Left ventricle myocardium inferior (tissue), 1 donor: ENCODE measurements at regions of chr3 and their contacts with region 1.

Region 1: GRCh38 chr3:148955544-148956346 is 35.6 kb upstream of the GYG1 start:
- DNase-seq: no peak
- H3K4me3 ChIP-seq: no peak overlapping the region
- H3K27ac ChIP-seq: peak overlapping the region; percentile 72
- H3K4me1 ChIP-seq: peaks cover 6% of the 10 kb centered on the region
- H3K27me3 ChIP-seq: no peaks in the 10 kb centered on the region
- CTCF ChIP-seq: peak; percentile 71

Region 2: GRCh38 chr3:148707601-148708380 is 248.0 kb before region 1 on chr3:
- intact Hi-C with region 1: no loop called
- DNase-seq: no peak
- H3K4me3 ChIP-seq: no peak overlapping the region
- H3K27ac ChIP-seq: no peak overlapping the region
- H3K4me1 ChIP-seq: no peaks in the 10 kb centered on the region
- H3K27me3 ChIP-seq: no peaks in the 10 kb centered on the region
- CTCF ChIP-seq: no peak

Region 3: DNA sequence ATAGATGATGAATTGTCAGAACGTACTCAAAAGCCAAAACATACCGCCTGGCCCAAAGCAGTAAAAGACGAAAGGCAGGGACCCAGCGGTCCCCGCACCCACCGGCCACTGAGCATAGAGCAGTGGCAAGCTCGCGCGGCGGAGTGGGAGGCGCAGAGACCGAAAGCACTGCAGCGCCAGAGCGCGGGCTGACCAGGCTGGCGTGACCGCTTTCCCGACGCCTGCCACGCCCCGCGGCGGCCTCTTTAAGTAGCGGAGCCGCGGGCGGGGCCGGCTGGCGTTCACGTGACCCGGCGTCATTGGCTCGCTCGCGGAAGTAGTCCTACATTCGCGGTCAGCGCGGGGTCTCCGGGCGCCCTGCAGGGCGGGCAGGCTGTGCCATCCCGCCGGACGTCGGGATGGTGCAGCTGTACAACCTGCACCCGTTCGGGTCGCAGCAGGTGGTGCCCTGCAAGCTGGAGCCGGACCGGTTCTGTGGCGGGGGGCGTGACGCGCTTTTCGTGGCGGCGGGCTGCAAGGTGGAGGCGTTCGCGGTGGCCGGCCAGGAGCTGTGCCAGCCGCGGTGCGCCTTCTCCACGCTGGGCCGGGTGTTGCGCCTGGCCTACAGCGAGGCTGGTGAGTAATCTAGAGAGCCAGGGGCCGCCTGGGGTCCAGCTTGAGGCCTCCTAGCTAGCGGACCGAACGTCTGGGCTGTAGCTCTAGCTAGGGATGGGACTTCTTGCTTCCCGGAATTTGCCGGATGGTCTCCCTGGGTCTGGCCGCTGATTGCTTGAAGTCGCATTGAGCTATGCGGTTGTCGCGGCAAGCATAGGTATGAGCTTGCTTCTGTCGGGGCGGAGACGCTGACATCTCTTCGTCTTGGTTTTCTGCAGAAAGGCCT is 173.8 kb after region 1 on chr3 and contains the start of gene HPS3:
- intact Hi-C with region 1: loop called (anchors 10 kb)
- DNase-seq: peak; percentile 93
- H3K4me3 ChIP-seq: peak within 1 kb of the TSS; percentile 77
- H3K27ac ChIP-seq: peak within 1 kb of the TSS; percentile 82
- H3K4me1 ChIP-seq: peaks cover 50% of the 10 kb centered on the region
- H3K27me3 ChIP-seq: no peaks in the 10 kb centered on the region
- CTCF ChIP-seq: no peak
- total RNA-seq, gene HPS3: 5.6 TPM

Region 4: GRCh38 chr3:149273096-149273751 is 317.5 kb after region 1 on chr3:
- intact Hi-C with region 1: loop called (anchors 5 kb)
- DNase-seq: no peak
- H3K4me3 ChIP-seq: no peak overlapping the region
- H3K27ac ChIP-seq: peak overlapping the region; percentile 57
- H3K4me1 ChIP-seq: peaks cover 19% of the 10 kb centered on the region
- H3K27me3 ChIP-seq: no peaks in the 10 kb centered on the region
- CTCF ChIP-seq: peak; percentile 97